A549 (cell line): ENCODE measurements at regions of chr15 and their contacts with region 1.

Region 1: GRCh38 chr15:78177447-78177873 is 28.3 kb downstream of the IDH3A start:
- DNase-seq: peak; percentile 44 to 61
- ATAC-seq: peak; percentile 75 to 87
- H3K4me3 ChIP-seq: no peak overlapping the region
- H3K27ac ChIP-seq: no peak overlapping the region
- H3K4me1 ChIP-seq: no peaks in the 10 kb centered on the region
- CTCF ChIP-seq: peak; percentile 93
- EP300 ChIP-seq: no peak
- POLR2A ChIP-seq: no peak
- RAD21 ChIP-seq: peak; percentile 94 to 95

Region 2: GRCh38 chr15:78034495-78035191 is 142.8 kb before region 1 on chr15:
- CTCF ChIA-PET with region 1: no interaction called
- POLR2A ChIA-PET with region 1: no interaction called
- DNase-seq: no peak
- ATAC-seq: no peak
- H3K4me3 ChIP-seq: no peak overlapping the region
- H3K27ac ChIP-seq: no peak overlapping the region
- H3K4me1 ChIP-seq: no peaks in the 10 kb centered on the region; the same call in 2 of the 3 replicates
- CTCF ChIP-seq: no peak
- EP300 ChIP-seq: no peak
- POLR2A ChIP-seq: no peak
- RAD21 ChIP-seq: no peak

Region 3: GRCh38 chr15:78065284-78065872 is 112.1 kb before region 1 on chr15:
- CTCF ChIA-PET with region 1: no interaction called
- POLR2A ChIA-PET with region 1: no interaction called
- DNase-seq: no peak
- ATAC-seq: peak; percentile 44 to 69; a peak in 3 of 6 replicates
- H3K4me3 ChIP-seq: no peak overlapping the region
- H3K27ac ChIP-seq: no peak overlapping the region
- H3K4me1 ChIP-seq: peaks cover 47% of the 10 kb centered on the region
- CTCF ChIP-seq: no peak
- EP300 ChIP-seq: no peak
- POLR2A ChIP-seq: no peak
- RAD21 ChIP-seq: no peak

Region 4: DNA sequence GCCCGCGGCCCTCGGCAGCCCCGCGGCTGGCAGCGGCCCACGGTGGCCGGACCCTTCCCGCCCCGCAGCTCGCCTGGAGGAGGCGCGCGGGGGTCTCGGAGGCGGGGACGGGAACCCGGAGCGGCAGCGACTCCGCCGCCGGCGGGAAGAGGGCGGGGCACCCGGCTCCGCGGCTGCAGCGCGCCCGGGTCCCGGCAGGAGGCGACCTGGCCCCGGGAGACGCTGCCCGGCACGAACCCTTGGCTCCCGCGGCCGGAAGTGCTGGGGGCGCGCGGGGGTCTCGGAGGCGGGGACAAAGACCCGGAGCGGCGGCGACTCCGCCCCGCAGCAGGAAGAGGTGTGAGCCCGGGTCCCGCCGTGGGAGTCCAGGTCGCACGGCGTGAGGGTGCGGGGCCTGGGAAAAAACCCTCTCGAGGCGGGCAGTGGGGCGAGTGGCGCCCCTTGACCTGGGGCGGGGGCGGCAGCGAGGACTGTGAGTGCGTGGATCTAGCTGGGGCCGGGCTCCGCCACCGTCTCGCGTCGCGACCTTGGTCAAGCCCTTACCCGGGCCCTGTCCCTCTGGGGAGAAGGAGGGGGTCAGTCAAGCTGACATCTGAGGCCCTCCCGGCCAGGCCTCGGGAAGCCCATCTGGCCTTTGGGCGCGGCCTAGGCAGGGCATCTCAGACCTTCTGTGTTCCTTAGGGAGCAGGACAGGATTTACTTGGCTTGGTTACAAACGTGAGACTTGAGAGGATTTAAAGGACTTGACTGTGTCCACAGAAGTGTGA is 46.0 kb before region 1 on chr15 and contains the start of gene CIB2:
- CTCF ChIA-PET with region 1: interaction called, 31 read pairs
- POLR2A ChIA-PET with region 1: no interaction called
- DNase-seq: peak; percentile 71 to 92
- ATAC-seq: peak; percentile 84 to 87
- H3K4me3 ChIP-seq: peak within 1 kb of the TSS; percentile 86
- H3K27ac ChIP-seq: peak within 1 kb of the TSS; percentile 91 to 94
- H3K4me1 ChIP-seq: peaks cover 38% of the 10 kb centered on the region
- CTCF ChIP-seq: peak; percentile 85
- EP300 ChIP-seq: no peak
- POLR2A ChIP-seq: peak; percentile 74
- RAD21 ChIP-seq: peak; percentile 61 to 81
- polyA plus RNA-seq, gene CIB2: 16.4 and 21.2 TPM in 2 replicates

Region 5: DNA sequence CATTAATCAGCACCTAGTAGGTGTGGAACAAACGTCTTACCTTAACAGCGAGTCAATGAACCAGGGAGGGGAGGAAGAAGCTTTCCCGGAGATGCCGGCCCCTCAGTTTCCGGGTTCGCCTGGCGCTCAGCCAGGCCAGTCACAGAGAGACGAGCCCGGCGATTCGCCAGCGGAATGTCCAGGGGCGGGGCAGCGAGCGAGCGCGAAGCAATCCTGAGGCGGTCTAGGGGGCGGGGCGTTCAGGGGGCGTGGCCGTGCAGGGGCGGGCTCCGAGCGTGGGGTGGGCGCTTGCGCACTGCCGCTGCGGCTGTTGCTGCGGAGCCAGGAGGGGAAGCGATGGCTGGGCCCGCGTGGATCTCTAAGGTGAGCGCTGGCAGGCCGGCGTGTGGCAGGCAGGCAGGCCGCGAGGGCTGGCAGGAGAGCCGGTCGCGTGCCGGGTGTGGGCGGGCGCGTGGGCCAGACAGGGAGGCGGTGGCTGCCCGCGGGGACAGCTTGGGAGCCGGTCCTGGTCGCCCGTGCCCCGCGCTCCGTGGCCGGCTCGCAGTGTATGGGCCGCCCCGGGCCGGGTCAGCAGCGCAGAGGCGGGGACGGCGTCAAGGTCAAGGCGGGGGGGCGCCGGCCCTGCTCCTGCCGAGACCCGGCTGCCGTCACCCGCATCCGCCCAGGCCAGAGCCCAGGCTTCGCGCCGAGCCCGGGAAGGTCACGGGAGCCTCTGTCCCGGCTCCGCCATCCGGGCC is 28.2 kb before region 1 on chr15 and contains the start of gene IDH3A:
- CTCF ChIA-PET with region 1: interaction called, 12 read pairs
- POLR2A ChIA-PET with region 1: no interaction called
- DNase-seq: peak; percentile 97
- ATAC-seq: peak; percentile 93 to 95
- H3K4me3 ChIP-seq: peak within 1 kb of the TSS; percentile 74
- H3K27ac ChIP-seq: peak within 1 kb of the TSS; percentile 80 to 92
- H3K4me1 ChIP-seq: peaks cover 16% of the 10 kb centered on the region
- CTCF ChIP-seq: no peak
- EP300 ChIP-seq: no peak
- POLR2A ChIP-seq: peak; percentile 97
- RAD21 ChIP-seq: no peak
- polyA plus RNA-seq, gene IDH3A: 148 and 149 TPM in 2 replicates

Region 6: DNA sequence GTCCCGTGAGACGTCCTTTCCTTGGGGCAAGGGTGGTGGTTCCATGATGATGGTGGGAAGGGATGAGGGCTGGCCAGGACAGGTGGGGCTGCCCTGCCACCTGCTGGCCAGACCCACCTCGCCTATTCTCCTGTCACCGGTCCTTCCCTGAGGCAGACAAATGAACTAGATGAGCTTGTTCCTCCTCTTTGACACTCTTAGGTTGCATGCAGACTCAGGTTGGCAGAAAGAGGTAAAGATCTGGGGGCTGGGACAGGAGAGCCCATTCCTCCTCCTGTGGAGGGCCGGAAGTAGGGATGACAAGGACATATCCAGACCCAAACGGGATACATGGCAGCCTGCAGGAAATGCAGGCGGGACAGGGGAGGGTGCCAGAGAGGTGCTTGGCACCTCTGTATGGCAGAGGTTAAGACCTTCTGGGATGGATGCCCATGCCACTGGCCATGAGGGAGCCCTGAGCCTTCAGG is 18.3 kb after region 1 on chr15:
- CTCF ChIA-PET with region 1: interaction called, 146 read pairs
- POLR2A ChIA-PET with region 1: no interaction called
- DNase-seq: peak; percentile 57 to 78
- ATAC-seq: peak; percentile 92 to 96
- H3K4me3 ChIP-seq: no peak overlapping the region
- H3K27ac ChIP-seq: no peak overlapping the region
- H3K4me1 ChIP-seq: no peaks in the 10 kb centered on the region
- CTCF ChIP-seq: peak; percentile 89
- EP300 ChIP-seq: no peak
- POLR2A ChIP-seq: no peak
- RAD21 ChIP-seq: peak; percentile 83 to 87

Region 7: GRCh38 chr15:78212546-78213424 is 35.3 kb after region 1 on chr15:
- CTCF ChIA-PET with region 1: interaction called, 21 read pairs
- POLR2A ChIA-PET with region 1: no interaction called
- DNase-seq: peak; percentile 66 to 89
- ATAC-seq: peak; percentile 82 to 88
- H3K4me3 ChIP-seq: no peak overlapping the region
- H3K27ac ChIP-seq: peak overlapping the region; percentile 52 to 69
- H3K4me1 ChIP-seq: peaks cover 56% of the 10 kb centered on the region
- CTCF ChIP-seq: no peak
- EP300 ChIP-seq: no peak
- POLR2A ChIP-seq: no peak
- RAD21 ChIP-seq: no peak

Region 8: GRCh38 chr15:78259232-78259631 is 81.8 kb after region 1 on chr15:
- CTCF ChIA-PET with region 1: interaction called, 17 read pairs
- POLR2A ChIA-PET with region 1: no interaction called
- DNase-seq: no peak
- ATAC-seq: no peak
- H3K4me3 ChIP-seq: no peak overlapping the region
- H3K27ac ChIP-seq: no peak overlapping the region
- H3K4me1 ChIP-seq: no peaks in the 10 kb centered on the region
- CTCF ChIP-seq: no peak
- EP300 ChIP-seq: no peak
- POLR2A ChIP-seq: no peak
- RAD21 ChIP-seq: no peak